H1 (cell line): ENCODE measurements at regions of chr13 and their contacts with region 1.

Region 1: GRCh38 chr13:31236211-31236786 is 36.5 kb downstream of the B3GLCT start:
- DNase-seq: no peak
- H3K4me3 ChIP-seq: no peak overlapping the region
- H3K27ac ChIP-seq: no peak overlapping the region
- H3K4me1 ChIP-seq: no peaks in the 10 kb centered on the region; a peak in 1 of 7 replicates
- H3K27me3 ChIP-seq: no peaks in the 10 kb centered on the region
- CTCF ChIP-seq: peak in 2 of 3 experiments; percentile 58 to 62; a peak in 3 of 4 replicates
- EP300 ChIP-seq: no peak
- POLR2A ChIP-seq: no peak
- RAD21 ChIP-seq: peak; percentile 75 to 79

Region 2: GRCh38 chr13:31264146-31264545 is 27.8 kb after region 1 on chr13:
- CTCF ChIA-PET with region 1: interaction called, 13 read pairs
- POLR2A ChIA-PET with region 1: no interaction called
- DNase-seq: no peak
- H3K4me3 ChIP-seq: no peak overlapping the region
- H3K27ac ChIP-seq: no peak overlapping the region
- H3K4me1 ChIP-seq: no peaks in the 10 kb centered on the region
- H3K27me3 ChIP-seq: no peaks in the 10 kb centered on the region
- CTCF ChIP-seq: no peak
- EP300 ChIP-seq: no peak
- POLR2A ChIP-seq: no peak
- RAD21 ChIP-seq: no peak

Region 3: DNA sequence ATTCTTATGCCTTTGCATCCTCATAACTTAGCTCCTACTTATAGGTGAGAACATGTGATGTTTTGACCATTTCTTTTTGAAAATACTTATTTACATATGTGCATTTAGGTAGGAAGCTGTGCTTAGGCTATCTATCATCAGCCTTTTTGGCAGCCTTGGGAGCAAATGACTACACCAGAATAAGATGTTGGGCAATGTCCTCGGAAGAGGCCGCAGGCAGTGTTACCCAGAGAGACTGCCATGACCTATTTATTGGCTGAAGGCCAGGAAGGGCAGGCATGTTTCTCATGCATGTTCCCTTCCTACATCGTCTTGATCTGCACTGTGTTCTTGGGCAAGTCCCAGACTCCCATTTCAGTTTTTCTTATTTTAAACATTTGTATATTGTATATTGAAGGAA is 85.7 kb after region 1 on chr13:
- CTCF ChIA-PET with region 1: no interaction called
- POLR2A ChIA-PET with region 1: no interaction called
- DNase-seq: no peak
- H3K4me3 ChIP-seq: no peak overlapping the region
- H3K27ac ChIP-seq: no peak overlapping the region
- H3K4me1 ChIP-seq: no peaks in the 10 kb centered on the region; a peak in 1 of 7 replicates
- H3K27me3 ChIP-seq: peaks cover 0 to 1% (median 0%) of the 10 kb centered on the region in 4 experiments; a peak in 1 of 7 replicates
- CTCF ChIP-seq: no peak
- EP300 ChIP-seq: no peak
- POLR2A ChIP-seq: no peak
- RAD21 ChIP-seq: no peak

Region 4: DNA sequence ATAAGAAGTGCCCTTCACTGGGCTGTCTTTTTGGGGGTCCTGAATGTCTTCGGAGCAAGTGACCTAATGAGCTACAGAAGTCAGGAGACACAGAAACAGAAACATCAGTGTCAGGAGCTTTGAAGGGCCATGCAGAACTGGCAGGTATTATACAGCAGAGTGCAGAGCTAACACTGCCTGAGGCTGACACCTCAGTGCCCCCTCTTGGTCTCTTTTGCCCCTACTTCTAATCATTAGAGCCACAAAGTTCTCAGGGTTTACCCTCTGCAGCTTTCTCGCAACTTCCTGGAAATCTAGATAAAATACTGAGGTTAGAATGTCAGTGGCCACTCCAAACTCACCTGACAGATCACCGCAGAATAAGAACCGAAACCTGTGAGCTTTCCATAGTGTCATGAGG is 136.2 kb after region 1 on chr13:
- CTCF ChIA-PET with region 1: interaction called, 18 read pairs
- POLR2A ChIA-PET with region 1: no interaction called
- DNase-seq: no peak
- H3K4me3 ChIP-seq: no peak overlapping the region
- H3K27ac ChIP-seq: no peak overlapping the region
- H3K4me1 ChIP-seq: no peaks in the 10 kb centered on the region
- H3K27me3 ChIP-seq: no peaks in the 10 kb centered on the region
- CTCF ChIP-seq: peak in 2 of 3 experiments; percentile 34 to 36; a peak in 3 of 4 replicates
- EP300 ChIP-seq: no peak
- POLR2A ChIP-seq: no peak
- RAD21 ChIP-seq: peak; percentile 45 to 60

Region 5: GRCh38 chr13:31409678-31410356 is 173.5 kb after region 1 on chr13:
- CTCF ChIA-PET with region 1: interaction called, 32 read pairs
- POLR2A ChIA-PET with region 1: no interaction called
- DNase-seq: no peak
- H3K4me3 ChIP-seq: no peak overlapping the region
- H3K27ac ChIP-seq: no peak overlapping the region
- H3K4me1 ChIP-seq: no peaks in the 10 kb centered on the region
- H3K27me3 ChIP-seq: no peaks in the 10 kb centered on the region
- CTCF ChIP-seq: peak in 2 of 3 experiments; percentile 16 to 18; a peak in 2 of 4 replicates
- EP300 ChIP-seq: no peak
- POLR2A ChIP-seq: no peak
- RAD21 ChIP-seq: peak; percentile 40 to 45

Region 6: GRCh38 chr13:31424117-31424729 is 187.9 kb after region 1 on chr13:
- CTCF ChIA-PET with region 1: interaction called, 114 read pairs
- POLR2A ChIA-PET with region 1: no interaction called
- DNase-seq: peak; percentile 44 to 75
- H3K4me3 ChIP-seq: no peak overlapping the region
- H3K27ac ChIP-seq: no peak overlapping the region
- H3K4me1 ChIP-seq: peaks cover 0 to 5% (median 0%) of the 10 kb centered on the region in 4 experiments; a peak in 1 of 7 replicates
- H3K27me3 ChIP-seq: no peaks in the 10 kb centered on the region
- CTCF ChIP-seq: peak; percentile 88 to 97 (median 91)
- EP300 ChIP-seq: no peak
- POLR2A ChIP-seq: no peak
- RAD21 ChIP-seq: peak; percentile 93 to 95

Region 7: DNA sequence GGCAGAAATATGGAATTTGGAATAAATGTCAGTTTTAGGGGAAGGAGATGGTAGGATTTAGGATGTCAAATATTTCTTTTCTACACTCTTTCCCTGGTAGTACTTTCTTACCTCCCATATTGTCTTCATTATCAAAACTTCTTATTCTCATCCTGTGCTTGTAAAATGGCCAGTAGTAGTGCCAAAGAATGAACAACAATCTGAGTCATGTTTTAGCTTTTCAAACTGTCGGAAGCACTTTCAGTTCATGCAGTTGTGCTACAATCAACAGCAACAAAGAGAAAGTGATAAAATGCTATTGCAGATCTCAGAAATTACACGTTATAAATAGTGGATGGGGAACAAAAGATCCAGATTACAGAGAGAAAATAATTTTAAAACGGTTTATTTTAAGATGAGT is 309.3 kb after region 1 on chr13:
- CTCF ChIA-PET with region 1: no interaction called
- POLR2A ChIA-PET with region 1: no interaction called
- DNase-seq: no peak
- H3K4me3 ChIP-seq: no peak overlapping the region
- H3K27ac ChIP-seq: no peak overlapping the region
- H3K4me1 ChIP-seq: no peaks in the 10 kb centered on the region
- H3K27me3 ChIP-seq: no peaks in the 10 kb centered on the region
- CTCF ChIP-seq: no peak
- EP300 ChIP-seq: no peak
- POLR2A ChIP-seq: no peak
- RAD21 ChIP-seq: no peak

Region 8: GRCh38 chr13:31797154-31797775 is 561.0 kb after region 1 on chr13:
- CTCF ChIA-PET with region 1: interaction called, 16 read pairs
- POLR2A ChIA-PET with region 1: no interaction called
- DNase-seq: no peak
- H3K4me3 ChIP-seq: no peak overlapping the region
- H3K27ac ChIP-seq: no peak overlapping the region
- H3K4me1 ChIP-seq: no peaks in the 10 kb centered on the region
- H3K27me3 ChIP-seq: no peaks in the 10 kb centered on the region; a peak in 1 of 7 replicates
- CTCF ChIP-seq: peak in 2 of 3 experiments; percentile 32 to 35; a peak in 2 of 4 replicates
- EP300 ChIP-seq: no peak
- POLR2A ChIP-seq: no peak
- RAD21 ChIP-seq: peak; percentile 61 to 64